ENCODE measurements at regions of chr11 and their contacts with region 1.

Region 1: DNA sequence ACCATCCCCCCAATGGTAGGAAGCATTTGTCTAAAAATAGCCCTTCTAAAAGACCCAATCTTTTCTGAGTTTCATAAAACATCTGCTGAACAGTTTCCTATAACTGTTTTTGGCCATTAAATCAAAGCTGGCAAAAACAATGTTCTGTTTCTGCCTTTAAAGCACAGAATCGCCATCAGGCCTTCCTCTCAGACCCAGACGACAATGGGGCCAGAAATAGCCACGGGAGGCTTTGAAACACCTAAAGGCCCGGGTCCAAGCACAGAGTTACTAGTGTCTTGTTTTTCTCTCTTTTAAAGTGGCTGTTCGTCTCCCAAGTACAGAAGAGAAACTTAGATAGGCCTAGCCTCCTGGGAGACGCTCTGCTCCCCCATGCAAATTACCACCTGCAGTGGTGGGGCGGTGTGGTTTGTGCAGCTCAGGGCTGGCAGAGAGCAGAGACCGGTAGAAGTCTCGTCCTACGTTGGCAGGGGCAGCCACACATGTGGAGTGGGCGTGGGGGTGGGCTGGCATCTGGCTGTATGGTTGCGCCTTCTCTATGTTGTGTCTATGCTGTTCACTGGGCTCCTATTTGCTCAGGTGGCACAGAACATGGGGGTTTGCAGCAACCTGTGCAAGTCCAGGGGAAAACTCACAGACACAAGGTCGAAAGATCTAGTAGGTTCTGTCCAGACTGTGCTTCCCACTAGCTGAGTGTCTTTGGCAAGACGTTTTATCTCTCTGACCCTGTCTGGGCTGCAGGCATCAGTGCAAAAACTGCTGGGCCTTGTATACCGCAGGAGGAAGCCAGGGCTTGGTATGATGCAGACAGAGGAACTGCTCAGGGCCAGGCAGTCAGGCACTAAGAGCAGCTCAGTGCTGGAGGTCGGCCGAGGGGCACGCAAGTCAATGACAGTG is 23.6 kb upstream of the ETS1 start:
- DNase-seq: no peak
- H3K4me3 ChIP-seq: no peak overlapping the region
- H3K27ac ChIP-seq: no peak overlapping the region
- H3K4me1 ChIP-seq: no peaks in the 10 kb centered on the region
- H3K27me3 ChIP-seq: peaks cover 8% of the 10 kb centered on the region
- CTCF ChIP-seq: no peak

Region 2: GRCh38 chr11:128336203-128336602 is 274.8 kb before region 1 on chr11:
- dilution Hi-C with region 1: no loop called
- DNase-seq: no peak
- H3K4me3 ChIP-seq: no peak overlapping the region
- H3K27ac ChIP-seq: no peak overlapping the region
- H3K4me1 ChIP-seq: no peaks in the 10 kb centered on the region
- H3K27me3 ChIP-seq: no peaks in the 10 kb centered on the region
- CTCF ChIP-seq: no peak

Region 3: DNA sequence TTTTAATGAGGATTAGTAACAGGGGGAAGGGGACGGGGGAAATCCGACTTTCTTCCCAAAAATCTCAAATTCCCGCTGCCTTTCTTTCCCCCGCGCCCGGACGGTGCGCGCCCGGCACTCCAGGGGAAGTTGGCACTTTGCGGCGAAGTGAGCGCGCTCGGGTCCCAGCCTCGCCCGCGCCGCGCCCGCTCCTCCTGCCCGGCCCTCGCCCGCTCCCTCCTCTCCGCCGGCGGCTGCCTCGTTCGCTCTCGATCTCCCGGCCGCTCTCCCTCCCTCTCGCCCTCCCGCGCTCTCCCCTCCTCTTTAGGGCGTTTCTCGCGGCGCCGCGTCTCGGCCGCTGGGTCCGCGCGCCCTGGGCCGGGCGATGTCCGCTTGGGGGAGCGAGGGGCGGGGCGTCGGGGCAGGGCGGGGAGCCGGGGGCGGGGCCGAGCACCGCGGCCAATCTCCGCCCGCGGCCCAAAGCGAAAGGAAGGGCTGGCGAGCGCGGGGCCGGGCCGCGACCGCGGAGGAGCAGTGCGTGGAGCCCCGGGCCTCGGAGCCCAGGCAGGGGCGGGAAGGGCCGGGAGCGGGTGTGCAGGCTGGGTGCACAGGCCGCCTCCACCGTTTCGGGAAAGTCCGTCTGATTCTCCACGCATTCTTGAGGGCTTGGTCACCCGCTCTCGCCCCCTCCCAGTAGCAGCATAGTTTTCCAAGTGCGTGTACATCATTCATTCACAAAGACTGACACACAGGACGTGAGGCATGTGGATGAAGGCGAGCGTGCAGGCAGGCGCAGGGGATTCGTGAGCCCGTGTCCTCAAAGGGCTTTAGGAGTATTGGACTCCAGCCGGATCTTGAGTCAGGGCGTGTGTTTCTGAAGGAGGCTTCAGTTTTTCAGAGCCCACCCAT is 88.7 kb before region 1 on chr11:
- dilution Hi-C with region 1: loop called (anchors 25 kb)
- DNase-seq: peak; percentile 95
- H3K4me3 ChIP-seq: peak overlapping the region; percentile 75 to 96 (median 94)
- H3K27ac ChIP-seq: peak overlapping the region; percentile 91
- H3K4me1 ChIP-seq: peaks cover 57% of the 10 kb centered on the region
- H3K27me3 ChIP-seq: no peaks in the 10 kb centered on the region
- CTCF ChIP-seq: no peak

Region 4: GRCh38 chr11:128796270-128796669 is 185.3 kb after region 1 on chr11:
- dilution Hi-C with region 1: no loop called
- DNase-seq: no peak
- H3K4me3 ChIP-seq: no peak overlapping the region
- H3K27ac ChIP-seq: no peak overlapping the region
- H3K4me1 ChIP-seq: no peaks in the 10 kb centered on the region
- H3K27me3 ChIP-seq: peaks cover 3% of the 10 kb centered on the region
- CTCF ChIP-seq: no peak